Activated T-helper 2 cell treated with anti-CD3 and anti-CD28 coated beads, Interferon-gamma antibody, Interleukin-2, Interleukin-4, amounts not matched to agents 10 μg/mL and 5 μg/mL and 100 μg/mL, durations not matched to agents 14 hours and 24 hours and 36 hours (primary cell): ENCODE measurements at regions of chr9 and their contacts with region 1.

Region 1: DNA sequence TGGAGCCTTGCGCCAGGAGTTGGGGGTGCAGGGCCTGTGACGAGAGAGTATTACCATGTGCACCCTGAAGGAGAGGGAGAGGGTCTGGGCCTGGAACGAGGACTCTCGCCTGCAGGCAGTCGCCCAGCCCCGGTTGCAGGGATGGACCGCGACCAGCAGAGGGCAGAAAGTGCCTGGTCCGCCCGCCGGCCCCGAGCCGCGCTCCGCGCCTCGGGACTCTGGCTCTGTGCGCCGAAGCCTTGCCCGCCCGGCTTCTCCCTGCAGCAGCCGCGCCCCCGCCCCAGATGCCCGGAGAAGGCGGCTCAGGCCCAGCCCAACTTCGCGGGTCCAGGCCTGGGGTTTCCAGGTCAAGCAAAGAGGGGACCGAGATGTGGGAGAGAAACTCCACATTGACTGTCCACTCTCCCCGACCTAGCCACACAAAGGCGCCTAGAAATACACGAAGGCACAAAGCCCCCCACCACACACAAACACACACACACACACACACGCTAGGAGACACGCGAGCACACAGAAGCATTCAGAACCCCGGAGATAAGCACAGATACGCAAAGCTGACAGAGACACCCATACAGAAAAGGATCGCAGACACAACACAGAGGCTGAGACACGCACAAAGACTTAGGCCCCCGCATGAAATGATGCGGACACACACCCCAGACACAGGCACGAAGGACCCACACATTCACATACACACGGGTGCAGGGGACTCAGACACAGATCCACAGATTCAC is 2.0 kb upstream of the LMX1B start:
- DNase-seq: peak; percentile 64
- H3K4me3 Mint-ChIP-seq: no peak overlapping the region
- H3K27ac Mint-ChIP-seq: peak overlapping the region; percentile 22
- H3K4me1 Mint-ChIP-seq: peaks cover 11% of the 10 kb centered on the region
- H3K27me3 Mint-ChIP-seq: peaks cover 75% of the 10 kb centered on the region

Region 2: GRCh38 chr9:126599047-126599650 is 12.6 kb before region 1 on chr9:
- intact Hi-C with region 1: no loop called
- DNase-seq: no peak
- H3K4me3 Mint-ChIP-seq: no peak overlapping the region
- H3K27ac Mint-ChIP-seq: no peak overlapping the region
- H3K4me1 Mint-ChIP-seq: no peaks in the 10 kb centered on the region
- H3K27me3 Mint-ChIP-seq: peaks cover 36% of the 10 kb centered on the region

Region 3: GRCh38 chr9:126625329-126626126 is 13.8 kb after region 1 on chr9:
- intact Hi-C with region 1: loop called (anchors 2 kb)
- DNase-seq: no peak
- H3K4me3 Mint-ChIP-seq: peak overlapping the region; percentile 40
- H3K27ac Mint-ChIP-seq: no peak overlapping the region
- H3K4me1 Mint-ChIP-seq: peaks cover 3% of the 10 kb centered on the region
- H3K27me3 Mint-ChIP-seq: peaks cover 89% of the 10 kb centered on the region

Region 4: GRCh38 chr9:126676685-126677143 is 65.0 kb after region 1 on chr9:
- intact Hi-C with region 1: loop called (anchors 2 kb)
- DNase-seq: no peak
- H3K4me3 Mint-ChIP-seq: no peak overlapping the region
- H3K27ac Mint-ChIP-seq: no peak overlapping the region
- H3K4me1 Mint-ChIP-seq: peaks cover 7% of the 10 kb centered on the region
- H3K27me3 Mint-ChIP-seq: peaks cover 76% of the 10 kb centered on the region

Region 5: GRCh38 chr9:126781186-126782052 is 169.7 kb after region 1 on chr9:
- intact Hi-C with region 1: loop called (anchors 5 kb)
- DNase-seq: peak; percentile 65
- H3K4me3 Mint-ChIP-seq: no peak overlapping the region
- H3K27ac Mint-ChIP-seq: no peak overlapping the region
- H3K4me1 Mint-ChIP-seq: no peaks in the 10 kb centered on the region
- H3K27me3 Mint-ChIP-seq: peaks cover 14% of the 10 kb centered on the region